Dendritic cell treated with granulocyte-macrophage colony-stimulating factor and Interleukin-4, amounts not matched to agents 40 ng/mL and 50 ng/mL, for 4 days (primary cell): ENCODE measurements at regions of chr3 and their contacts with region 1.

Region 1: GRCh38 chr3:152471814-152472671 is 203.3 kb downstream of the MBNL1 start:
- H3K4me3 Mint-ChIP-seq: peak overlapping the region; percentile 28
- H3K27ac Mint-ChIP-seq: peak overlapping the region; percentile 32
- H3K4me1 Mint-ChIP-seq: peaks cover 8% of the 10 kb centered on the region
- H3K27me3 Mint-ChIP-seq: peaks cover 3% of the 10 kb centered on the region

Region 2: GRCh38 chr3:152071924-152072323 is 400.1 kb before region 1 on chr3:
- intact Hi-C with region 1: loop called (anchors 2 kb)
- H3K4me3 Mint-ChIP-seq: no peak overlapping the region
- H3K27ac Mint-ChIP-seq: no peak overlapping the region
- H3K4me1 Mint-ChIP-seq: no peaks in the 10 kb centered on the region
- H3K27me3 Mint-ChIP-seq: no peaks in the 10 kb centered on the region

Region 3: DNA sequence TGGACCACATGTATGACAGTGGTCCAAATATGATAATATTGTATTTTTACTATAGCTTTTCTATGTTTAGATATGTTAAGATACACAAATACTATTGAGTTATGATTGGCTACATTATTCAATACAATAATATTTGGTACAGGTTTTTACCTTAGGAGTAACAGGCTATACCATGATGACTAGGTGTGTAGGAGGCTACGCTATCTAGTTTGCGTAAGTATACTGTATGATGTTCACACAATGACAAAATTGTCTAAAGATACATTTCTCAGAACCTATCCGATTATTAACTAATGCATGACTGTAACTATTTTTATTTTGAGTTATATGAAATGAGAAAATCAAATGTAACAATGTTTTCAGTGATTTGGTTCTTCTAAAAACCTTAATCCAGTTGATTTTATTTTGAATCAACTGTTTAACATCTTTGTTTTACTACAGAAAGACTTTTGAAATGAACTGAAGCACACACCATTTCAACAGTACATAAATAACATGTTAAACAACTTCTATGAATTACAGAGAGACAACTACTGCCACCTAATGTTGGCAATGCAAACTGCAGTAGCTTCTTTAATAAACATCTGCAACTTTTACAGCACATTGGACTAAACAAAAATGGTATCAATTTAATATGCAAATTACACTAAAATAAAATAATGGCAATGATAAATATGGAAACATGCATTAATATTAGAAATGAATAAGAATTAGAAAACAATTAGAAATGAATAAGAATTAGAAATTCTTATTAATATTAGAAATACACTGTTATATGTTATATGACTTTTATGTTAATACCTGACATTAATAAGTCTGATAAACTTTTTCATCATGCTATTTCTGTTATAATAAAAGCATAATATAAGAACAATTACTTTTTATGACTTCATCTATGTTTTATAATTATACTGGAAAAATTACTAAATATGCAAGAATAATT is 52.4 kb after region 1 on chr3:
- intact Hi-C with region 1: loop called (anchors 1 kb)
- H3K4me3 Mint-ChIP-seq: no peak overlapping the region
- H3K27ac Mint-ChIP-seq: no peak overlapping the region
- H3K4me1 Mint-ChIP-seq: no peaks in the 10 kb centered on the region
- H3K27me3 Mint-ChIP-seq: no peaks in the 10 kb centered on the region

Region 4: GRCh38 chr3:152574461-152575079 is 102.5 kb after region 1 on chr3:
- intact Hi-C with region 1: loop called (anchors 2 kb)
- H3K4me3 Mint-ChIP-seq: no peak overlapping the region
- H3K27ac Mint-ChIP-seq: no peak overlapping the region
- H3K4me1 Mint-ChIP-seq: peaks cover 6% of the 10 kb centered on the region
- H3K27me3 Mint-ChIP-seq: no peaks in the 10 kb centered on the region

Region 5: DNA sequence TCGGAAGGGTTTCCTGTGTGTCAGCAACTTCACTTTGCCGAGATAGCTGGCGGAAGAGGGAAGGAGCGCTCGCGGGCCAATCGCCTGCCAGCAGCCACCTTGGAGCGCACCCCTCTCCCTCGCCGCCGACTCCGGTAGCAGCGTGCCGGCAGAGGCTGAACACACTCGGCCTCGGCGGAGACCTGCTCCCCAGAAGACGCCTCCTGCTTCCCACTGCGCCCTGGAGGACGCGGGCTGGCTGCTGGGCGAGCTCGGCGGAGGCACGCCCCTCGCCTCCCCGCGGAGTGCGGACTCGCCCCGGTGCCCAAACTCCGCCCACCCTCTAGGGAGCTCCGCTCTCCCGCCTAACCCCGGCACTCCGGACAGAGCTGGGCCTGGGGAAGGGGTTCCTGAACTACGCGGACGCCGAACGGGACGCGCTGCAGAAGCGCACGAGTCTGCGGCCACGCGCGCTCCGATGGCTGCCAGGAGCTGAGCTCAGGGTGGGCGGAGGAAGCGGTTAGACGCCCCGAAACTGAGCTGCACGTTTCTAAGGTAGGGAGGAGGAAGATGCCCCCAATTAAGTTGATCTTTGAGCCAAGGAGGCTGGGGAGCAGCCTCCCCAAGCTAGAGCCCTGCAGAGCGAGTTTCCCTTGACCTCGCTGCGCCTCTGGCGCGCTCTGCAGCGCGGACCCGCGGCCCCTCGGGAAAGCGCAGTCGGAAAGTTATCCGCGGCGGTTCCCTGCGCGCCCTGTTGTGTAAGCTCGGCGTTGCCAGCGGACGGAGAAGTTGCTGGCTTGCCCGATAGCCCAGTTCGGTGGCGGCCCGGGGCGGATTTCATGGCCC is 362.9 kb after region 1 on chr3 and contains the start of gene P2RY1:
- intact Hi-C with region 1: loop called (anchors 10 kb)
- H3K4me3 Mint-ChIP-seq: peak within 1 kb of the TSS; percentile 95
- H3K27ac Mint-ChIP-seq: peak within 1 kb of the TSS; percentile 98
- H3K4me1 Mint-ChIP-seq: peaks cover 44% of the 10 kb centered on the region
- H3K27me3 Mint-ChIP-seq: peaks cover 8% of the 10 kb centered on the region